WTC11 (cell line): ENCODE measurements at regions of chr3 and their contacts with region 1.

Region 1: DNA sequence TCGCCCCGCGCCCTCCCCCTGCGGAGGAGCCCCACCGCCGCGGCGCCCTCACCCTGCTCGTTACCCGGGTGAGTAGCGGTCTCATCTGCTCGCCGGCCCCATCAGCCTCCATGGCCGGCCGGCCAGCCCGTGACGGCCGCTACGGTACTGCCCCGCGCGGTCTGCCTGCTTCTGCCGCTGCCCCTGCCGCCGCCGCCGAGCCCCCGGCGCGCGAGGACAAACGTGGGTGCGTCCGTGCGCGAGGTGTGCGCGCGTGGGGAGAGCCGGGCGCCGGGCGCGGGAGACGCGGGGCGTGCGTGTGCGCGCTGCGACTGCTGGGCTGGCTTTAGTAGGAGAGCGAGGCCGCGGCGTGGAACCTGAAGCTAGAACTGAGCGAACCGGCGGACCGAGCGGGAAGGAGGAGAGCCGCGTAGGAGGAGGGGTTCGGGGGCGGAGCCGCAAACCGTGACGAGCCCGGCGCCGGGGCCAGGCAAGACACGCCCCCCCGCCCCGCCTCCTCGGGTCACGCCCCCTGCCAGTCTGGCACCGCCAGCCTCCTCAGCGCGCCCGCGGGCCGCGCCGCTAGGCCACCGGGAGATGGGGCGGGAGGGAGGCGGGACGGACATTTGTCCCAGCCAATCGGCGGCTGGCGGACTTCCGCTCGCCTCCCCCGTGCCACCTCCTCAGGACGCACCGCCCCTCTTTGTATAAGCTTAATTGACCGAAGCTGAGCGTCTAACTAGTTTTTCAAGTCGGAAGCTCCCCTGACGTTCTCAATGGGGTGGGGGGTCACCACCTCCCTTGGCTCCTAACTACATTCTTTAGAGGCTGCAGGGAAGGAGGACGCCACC is at the start of gene SLC4A7:
- DNase-seq: peak; percentile 99
- ATAC-seq: peak; percentile 94
- H3K4me3 Mint-ChIP-seq: peak within 1 kb of the TSS; percentile 97
- H3K27ac Mint-ChIP-seq: peak within 1 kb of the TSS; percentile 76
- H3K4me1 Mint-ChIP-seq: peaks cover 40% of the 10 kb centered on the region
- H3K27me3 Mint-ChIP-seq: no peaks in the 10 kb centered on the region
- CTCF ChIP-seq: no peak
- total RNA-seq, gene SLC4A7: 87.0 to 93.7 TPM (median 90.8 TPM) in 3 replicates

Region 2: DNA sequence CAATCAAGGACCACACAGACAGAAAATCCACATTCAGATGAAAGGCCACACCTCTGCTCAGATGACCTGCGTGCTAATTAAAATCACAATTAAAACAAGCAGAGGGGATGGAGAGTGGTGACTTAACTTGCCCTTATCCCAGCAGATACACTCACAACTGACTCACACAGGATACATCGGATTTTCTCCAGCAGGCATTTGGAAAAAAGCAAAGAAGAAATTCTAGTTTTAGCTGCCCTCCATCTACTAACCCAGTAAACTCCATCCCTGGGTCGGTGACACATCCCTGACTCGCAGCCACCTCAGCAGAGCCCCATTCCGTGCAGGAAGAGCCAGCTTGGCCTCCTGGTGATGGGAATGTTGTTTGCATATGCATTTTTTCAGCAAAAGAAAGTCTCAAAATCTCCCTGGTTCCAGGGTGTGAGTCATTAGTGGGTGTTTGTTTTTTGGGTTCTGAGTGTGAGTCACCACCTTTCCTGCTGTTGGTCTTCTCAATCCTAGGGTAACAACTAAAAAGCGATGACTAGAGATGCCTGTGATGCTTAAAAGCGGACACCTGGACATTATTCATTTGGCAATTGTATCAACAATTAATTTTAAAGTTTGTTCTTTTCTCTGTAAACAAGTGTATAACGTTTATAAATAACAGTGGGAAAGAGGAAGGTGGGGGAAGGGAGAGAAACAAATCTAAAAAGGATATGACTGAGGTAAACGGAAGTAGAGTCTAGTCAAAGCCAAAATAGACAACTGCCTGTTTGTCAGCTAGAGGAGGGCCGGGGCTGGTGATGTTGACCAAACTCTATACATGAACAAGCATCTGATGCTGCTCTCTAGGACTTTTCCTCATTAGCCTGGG is 49.7 kb after region 1 on chr3:
- CTCF ChIA-PET with region 1: no interaction called
- POLR2A ChIA-PET with region 1: interaction called, 15 read pairs
- DNase-seq: peak; percentile 77
- ATAC-seq: peak; percentile 92
- H3K4me3 Mint-ChIP-seq: peak overlapping the region; percentile 55
- H3K27ac Mint-ChIP-seq: peak overlapping the region; percentile 99
- H3K4me1 Mint-ChIP-seq: peaks cover 66% of the 10 kb centered on the region
- H3K27me3 Mint-ChIP-seq: peaks cover 3% of the 10 kb centered on the region
- CTCF ChIP-seq: no peak

Region 3: GRCh38 chr3:27639271-27639670 is 155.0 kb after region 1 on chr3:
- CTCF ChIA-PET with region 1: no interaction called
- POLR2A ChIA-PET with region 1: no interaction called
- DNase-seq: no peak
- ATAC-seq: no peak
- H3K4me3 Mint-ChIP-seq: no peak overlapping the region
- H3K27ac Mint-ChIP-seq: no peak overlapping the region
- H3K4me1 Mint-ChIP-seq: peaks cover 16% of the 10 kb centered on the region
- H3K27me3 Mint-ChIP-seq: peaks cover 7% of the 10 kb centered on the region; the same call in 1 of the 2 replicates
- CTCF ChIP-seq: no peak